ENCODE measurements at regions of chr5 and their contacts with region 1.

Region 1: GRCh38 chr5:136174021-136174659 is 18.8 kb downstream of the SMIM32 start:
- DNase-seq: peak; percentile 20
- ATAC-seq: no peak
- H3K4me3 ChIP-seq: no peak overlapping the region
- H3K4me3 Mint-ChIP-seq: no peak overlapping the region
- H3K27ac ChIP-seq: no peak overlapping the region
- H3K27ac Mint-ChIP-seq: no peak overlapping the region
- H3K4me1 ChIP-seq: no peaks in the 10 kb centered on the region
- H3K4me1 Mint-ChIP-seq: no peaks in the 10 kb centered on the region
- H3K27me3 ChIP-seq: no peaks in the 10 kb centered on the region
- H3K27me3 Mint-ChIP-seq: no peaks in the 10 kb centered on the region
- CTCF ChIP-seq: peak; percentile 40

Region 2: DNA sequence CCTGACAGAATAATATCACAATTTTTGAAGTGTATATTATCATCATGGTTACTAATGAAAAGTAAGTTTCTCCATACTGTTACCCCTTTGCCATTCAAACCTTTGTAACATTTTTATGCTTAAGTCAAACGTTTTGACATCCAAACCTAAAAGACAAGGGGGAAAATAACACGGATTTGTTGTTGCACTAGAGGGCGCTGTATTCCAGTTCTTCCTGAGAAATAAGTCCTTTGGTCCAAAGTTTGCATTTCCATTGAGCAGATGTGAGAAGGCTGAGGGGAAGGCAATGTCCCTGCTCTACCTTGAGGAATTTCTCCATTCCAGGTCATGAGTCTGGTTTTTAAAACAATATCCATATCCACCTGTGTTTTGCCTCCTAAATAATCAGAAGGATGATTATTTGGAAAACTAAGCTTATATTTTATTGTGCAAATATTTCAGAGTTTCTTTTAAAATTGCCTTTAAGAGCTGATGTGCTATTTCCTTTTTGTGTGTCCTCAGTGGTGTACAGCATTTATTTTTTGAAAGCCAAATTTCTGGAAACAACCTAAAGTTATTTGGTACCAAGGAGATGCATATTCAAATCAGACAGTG is 229.1 kb before region 1 on chr5:
- CTCF ChIA-PET with region 1: interaction called, 5 read pairs
- POLR2A ChIA-PET with region 1: no interaction called
- intact Hi-C with region 1: loop called (anchors 1 kb)
- DNase-seq: peak; percentile 43
- ATAC-seq: no peak
- H3K4me3 ChIP-seq: no peak overlapping the region
- H3K4me3 Mint-ChIP-seq: no peak overlapping the region
- H3K27ac ChIP-seq: no peak overlapping the region
- H3K27ac Mint-ChIP-seq: no peak overlapping the region
- H3K4me1 ChIP-seq: no peaks in the 10 kb centered on the region
- H3K4me1 Mint-ChIP-seq: no peaks in the 10 kb centered on the region
- H3K27me3 ChIP-seq: peaks cover 0 to 4% (median 0%) of the 10 kb centered on the region in 4 experiments
- H3K27me3 Mint-ChIP-seq: peaks cover 11% of the 10 kb centered on the region
- CTCF ChIP-seq: peak; percentile 76

Region 3: DNA sequence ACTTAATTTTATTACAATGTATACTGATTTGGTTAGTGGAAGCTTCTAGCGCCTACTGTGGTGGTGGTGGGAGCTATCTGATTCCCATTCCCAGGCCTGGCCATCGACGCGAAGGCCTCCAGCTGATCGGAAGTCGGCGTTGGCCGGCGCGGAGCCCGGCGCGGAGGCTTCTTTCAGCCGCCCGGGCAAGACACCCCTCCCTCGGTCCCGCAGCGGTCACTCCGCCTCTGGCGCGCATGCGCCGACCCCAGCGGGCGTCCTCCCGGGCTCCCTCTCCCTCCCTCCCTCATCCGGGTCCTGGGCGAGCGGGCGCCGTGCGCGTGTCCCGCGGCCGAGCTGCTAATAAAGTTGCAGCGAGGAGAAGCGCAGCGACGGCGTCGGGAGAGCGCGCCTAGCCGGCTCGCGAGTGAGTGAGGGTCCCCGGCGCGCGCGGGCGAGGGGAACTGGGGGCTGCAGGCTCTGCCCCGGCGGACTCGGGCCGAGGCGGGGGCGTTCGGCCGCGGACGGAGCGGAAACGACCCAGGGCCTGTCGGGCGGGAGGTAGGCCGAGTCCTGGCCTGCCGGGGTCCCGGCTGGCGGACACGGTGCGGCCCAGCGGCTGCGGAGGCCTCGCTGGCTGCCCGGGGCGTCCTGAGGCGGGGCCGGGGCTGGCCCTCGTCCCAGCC is 41.5 kb before region 1 on chr5 and contains the start of gene SMAD5:
- CTCF ChIA-PET with region 1: no interaction called
- POLR2A ChIA-PET with region 1: no interaction called
- intact Hi-C with region 1: loop called (anchors 5 kb)
- DNase-seq: peak; percentile 88
- ATAC-seq: peak; percentile 87
- H3K4me3 ChIP-seq: peak within 1 kb of the TSS; percentile 60 to 92 (median 76)
- H3K4me3 Mint-ChIP-seq: peak within 1 kb of the TSS; percentile 98
- H3K27ac ChIP-seq: peak within 1 kb of the TSS; percentile 28 to 83
- H3K27ac Mint-ChIP-seq: peak within 1 kb of the TSS; percentile 95
- H3K4me1 ChIP-seq: peaks cover 10 to 17% of the 10 kb centered on the region in 2 donors
- H3K4me1 Mint-ChIP-seq: peaks cover 32% of the 10 kb centered on the region
- H3K27me3 ChIP-seq: peaks cover 0 to 9% (median 2%) of the 10 kb centered on the region in 4 experiments
- H3K27me3 Mint-ChIP-seq: peaks cover 10% of the 10 kb centered on the region
- CTCF ChIP-seq: no peak
- total RNA-seq, gene SMAD5: 38.6 and 43.1 TPM in 2 replicates